Right ventricle myocardium superior (tissue), 1 donor: ENCODE measurements at regions of chr3 and their contacts with region 1.

Region 1: DNA sequence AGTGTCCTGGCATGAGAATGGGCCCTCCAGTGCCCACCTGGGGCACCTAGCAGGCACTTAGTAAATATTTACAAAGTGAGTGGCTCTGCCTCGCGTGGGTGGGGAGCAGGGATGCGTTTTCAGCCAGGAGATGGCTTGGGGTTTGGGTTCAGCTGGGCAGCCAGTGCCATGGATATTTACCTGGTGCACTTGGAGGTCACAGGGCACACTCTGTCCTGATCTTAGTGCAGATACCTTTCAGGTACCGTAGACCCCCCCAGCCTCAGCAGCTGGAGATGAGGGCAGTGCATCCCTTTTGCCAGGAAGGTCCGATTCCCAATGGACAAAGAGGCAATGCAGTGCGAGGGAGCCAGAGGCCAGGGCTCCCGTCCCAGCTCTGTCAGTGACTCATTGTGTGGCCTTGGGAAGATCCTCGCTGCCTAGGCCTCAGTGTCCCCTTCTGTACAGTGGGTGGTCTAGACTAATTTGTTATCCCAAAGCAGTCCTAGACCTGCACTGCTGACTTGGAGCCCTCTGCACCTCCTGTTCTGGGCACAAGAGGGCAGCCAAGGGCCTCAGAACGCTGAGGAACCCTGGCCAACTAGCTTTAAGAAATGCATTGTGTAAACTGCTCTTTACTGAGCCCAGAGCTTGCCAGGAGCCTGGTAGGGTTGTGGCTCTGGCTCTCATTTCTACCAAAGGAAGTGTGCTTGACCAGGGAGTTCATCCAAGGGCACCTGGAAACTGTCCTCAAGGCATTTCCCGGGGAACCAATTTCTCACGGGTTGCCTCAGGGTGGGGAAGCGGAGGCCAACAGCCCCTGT is 16.0 kb downstream of the HDAC11 start:
- DNase-seq: peak; percentile 87
- ATAC-seq: peak; percentile 95

Region 2: DNA sequence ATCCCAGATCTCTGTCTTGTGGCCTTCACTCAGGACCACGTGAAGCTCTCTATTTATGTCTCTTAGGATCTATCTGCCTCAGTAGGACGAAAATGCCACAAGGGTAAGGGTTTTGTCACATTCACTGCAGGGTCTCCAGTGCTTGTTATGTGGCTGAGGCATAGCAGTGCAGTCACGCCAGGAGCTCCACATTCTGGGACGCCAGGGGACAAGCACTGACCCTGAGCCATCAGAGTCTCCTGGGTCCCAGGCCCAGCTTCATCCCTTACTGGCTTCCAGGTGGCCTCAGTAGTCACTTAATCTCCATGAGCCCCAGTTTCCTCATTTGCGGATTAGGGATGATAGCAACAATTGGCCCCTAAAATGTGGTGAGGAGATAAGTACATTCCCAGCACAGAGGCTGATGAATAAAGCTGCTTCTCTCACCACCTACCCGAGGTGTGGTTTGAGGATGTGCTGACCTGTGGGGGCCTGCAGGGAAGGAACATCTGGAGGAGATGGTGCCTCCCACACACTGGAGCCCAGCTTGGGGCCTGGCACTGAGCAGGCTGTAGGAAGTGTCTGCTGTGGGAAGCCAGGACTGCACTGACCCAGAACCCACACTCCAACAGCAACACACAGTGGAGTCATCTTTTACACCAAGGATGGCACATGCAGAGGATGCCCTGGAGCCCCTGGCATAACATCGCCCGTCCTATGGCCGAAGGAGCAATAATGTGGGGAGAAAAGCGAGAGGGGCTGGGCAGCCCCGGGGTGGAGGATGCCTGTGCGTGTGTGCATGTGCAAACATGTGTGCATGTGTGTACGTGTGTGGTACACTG is 329.7 kb before region 1 on chr3:
- intact Hi-C with region 1: no loop called
- DNase-seq: no peak
- ATAC-seq: no peak

Region 3: DNA sequence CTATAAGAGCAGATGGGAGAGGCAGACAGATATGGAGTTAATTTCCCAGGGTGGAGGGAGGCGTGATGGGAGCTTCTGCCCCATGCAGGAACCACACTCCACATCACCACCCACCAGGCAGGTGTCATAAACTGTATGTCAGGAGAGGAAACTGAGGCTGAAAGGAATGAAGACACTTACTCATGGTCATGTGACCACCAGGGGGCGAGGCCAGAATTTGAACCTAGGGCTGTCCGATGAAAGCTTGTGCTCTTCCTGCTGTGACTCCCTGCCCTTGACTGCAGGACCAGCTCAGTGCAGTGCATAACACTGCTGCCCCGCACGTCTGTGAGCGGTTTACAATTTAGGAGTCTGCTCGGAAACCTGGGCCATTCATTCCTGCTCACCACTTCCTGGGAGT is 104.8 kb before region 1 on chr3:
- intact Hi-C with region 1: no loop called
- DNase-seq: no peak
- ATAC-seq: no peak

Region 4: DNA sequence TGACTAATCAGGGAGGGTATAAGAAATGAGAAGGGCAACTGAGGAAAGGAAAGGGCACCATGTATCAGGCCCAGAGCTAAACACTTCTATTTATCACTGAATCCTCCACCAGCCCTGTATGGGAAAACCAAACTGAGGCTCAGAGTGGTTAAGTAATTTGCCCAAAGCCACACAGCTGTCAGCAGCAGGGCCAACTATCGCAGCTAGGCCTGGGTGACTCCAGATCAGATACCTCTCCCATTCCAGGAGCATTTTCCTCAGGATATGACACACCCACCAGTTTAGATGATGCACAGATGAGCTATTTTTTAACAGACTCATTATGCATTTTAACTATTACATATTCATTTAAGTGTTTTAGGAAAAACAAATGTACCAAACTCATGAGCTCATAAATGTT is 90.5 kb before region 1 on chr3:
- intact Hi-C with region 1: no loop called
- DNase-seq: no peak
- ATAC-seq: no peak

Region 5: DNA sequence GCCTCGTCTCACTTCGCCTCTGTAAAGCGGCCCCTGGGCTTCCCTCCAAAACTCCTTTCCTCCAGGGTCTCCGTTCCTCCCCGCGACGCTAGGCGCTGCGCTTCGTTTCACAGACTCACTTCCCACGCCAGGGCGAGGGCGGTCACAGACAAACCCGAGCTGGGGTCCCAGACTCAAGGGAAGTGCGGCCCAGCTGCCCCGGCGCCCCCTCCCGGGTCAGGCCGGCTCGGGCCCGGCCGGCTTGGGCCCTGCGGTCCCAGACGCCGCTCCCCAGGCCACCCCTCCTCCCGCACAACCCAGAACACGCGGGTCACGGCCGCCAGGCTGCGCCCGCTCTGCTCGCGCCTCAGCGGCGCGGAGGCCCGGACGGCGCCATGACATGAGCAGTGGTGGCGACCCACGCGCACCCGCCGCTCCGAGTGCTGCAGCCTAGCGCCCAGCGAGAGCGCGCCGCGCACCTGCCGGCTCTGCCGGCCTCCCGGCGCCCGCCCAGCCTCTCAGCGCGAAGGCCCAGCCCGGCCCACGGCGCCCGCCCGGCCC is 76.5 kb before region 1 on chr3:
- intact Hi-C with region 1: no loop called
- DNase-seq: peak; percentile 68
- ATAC-seq: peak; percentile 86

Region 6: DNA sequence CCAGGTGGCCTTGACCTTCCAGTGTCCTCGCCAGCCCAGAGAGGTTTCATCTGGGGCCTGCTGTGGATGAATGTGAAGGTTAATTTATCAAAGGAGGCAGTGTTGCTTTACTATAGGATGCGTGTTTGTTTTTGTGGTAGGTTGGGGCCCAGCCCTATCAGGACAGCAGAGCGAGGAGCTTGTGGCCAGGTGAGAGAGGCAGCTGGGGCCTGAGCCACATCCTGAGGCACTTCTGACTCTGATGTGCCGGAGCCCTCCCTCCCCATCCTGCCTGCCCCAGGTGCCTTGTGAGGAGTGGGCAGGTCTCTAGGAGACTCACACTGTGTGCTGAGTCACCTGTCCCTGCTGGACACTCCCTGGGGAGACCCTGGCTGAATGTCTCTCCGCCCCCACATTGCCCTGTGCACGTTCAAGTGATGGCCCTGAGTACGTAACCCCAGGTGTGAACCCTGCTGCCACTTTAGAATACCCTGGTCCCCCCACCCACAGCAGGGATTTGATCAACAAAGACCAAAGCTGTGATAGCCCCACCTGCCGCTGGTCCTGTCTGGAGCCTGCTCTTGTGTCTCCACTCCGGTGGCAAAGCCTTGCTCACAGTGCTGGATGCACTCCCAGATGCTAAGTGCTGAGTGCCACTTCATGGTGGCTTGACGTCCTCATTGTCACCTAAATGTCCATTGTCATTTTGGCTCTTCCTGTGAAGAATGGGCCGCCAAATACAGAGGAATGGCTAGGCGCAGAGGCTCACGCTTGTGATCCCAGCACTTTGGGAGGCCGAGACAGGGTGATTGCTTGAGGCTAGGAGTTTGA is 68.8 kb after region 1 on chr3:
- intact Hi-C with region 1: loop called (anchors 5 kb)
- DNase-seq: peak; percentile 76
- ATAC-seq: peak; percentile 88

Region 7: GRCh38 chr3:13648060-13649001 is 152.2 kb after region 1 on chr3:
- intact Hi-C with region 1: loop called (anchors 2 kb)
- DNase-seq: peak; percentile 91
- ATAC-seq: peak; percentile 93